Activated CD8-positive, alpha-beta T cell treated with anti-CD3 and anti-CD28 coated beads, Interleukin-2, amount 10 ng/mL, durations not matched to agents 7 days and 5 days (primary cell): ENCODE measurements at regions of chr6 and their contacts with region 1.

Region 1: DNA sequence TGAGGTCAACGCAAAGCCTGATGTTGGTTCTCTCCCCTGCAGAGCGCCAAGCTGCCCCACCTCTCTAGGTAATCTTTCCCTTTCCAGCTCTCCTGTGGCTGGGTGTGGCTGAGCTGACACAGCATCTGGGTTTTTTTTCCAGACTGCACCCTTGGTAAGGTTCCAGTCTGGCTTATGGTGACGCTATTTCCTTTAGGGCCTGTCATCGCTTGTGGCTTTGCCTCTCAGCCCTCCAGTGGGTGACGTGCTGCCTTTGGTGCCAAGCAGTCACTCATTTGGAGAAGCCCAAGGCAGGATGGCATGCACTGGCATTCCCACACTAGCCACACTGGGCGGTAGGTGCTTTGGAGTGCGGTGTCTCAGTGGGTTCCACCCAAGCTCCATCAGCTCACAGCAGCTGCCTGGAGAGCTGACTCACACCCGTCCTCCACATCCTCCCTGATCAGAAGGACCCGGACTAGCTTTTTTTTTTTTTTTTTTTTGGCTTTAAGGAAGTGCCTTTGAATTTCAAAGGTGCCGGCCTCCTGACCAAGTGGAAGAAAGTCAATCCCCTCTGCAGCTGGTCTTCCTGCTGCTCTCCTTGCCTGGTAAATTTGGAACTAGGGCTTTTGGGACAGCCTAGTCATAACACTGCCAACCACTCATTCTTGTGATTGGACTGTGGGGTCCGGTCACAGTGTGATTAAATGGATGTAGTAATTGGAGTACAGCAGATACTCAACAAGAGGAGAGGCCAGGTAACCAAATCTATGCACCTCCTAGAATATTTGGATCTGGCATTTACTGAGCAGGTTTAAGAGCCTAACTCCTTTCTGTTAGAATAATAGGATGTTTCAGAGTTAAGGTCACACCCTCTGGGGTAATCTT is 153.6 kb downstream of the CD83 start:
- DNase-seq: peak; percentile 78
- ATAC-seq: peak; percentile 82
- H3K4me3 Mint-ChIP-seq: no peak overlapping the region
- H3K27ac Mint-ChIP-seq: peak overlapping the region; percentile 90
- H3K4me1 Mint-ChIP-seq: peaks cover 50% of the 10 kb centered on the region
- H3K27me3 Mint-ChIP-seq: no peaks in the 10 kb centered on the region

Region 2: DNA sequence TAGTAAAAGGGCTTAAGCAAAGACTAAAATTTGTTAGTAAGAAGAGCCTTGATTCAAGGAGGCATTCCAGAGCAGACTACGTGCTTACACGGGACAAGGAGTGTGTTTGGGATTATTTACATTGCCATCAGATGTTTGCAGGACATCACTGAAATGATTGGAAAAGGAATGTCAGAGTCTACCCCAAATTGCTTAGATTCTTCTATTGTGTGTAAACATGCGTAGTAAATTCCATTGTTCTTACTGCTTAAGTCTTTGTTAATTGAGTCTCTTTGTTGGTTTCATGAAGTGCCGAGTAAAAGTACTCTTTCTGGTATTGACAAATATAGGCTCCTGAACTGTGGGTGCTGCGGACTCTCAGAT is 93.1 kb before region 1 on chr6:
- CTCF ChIA-PET with region 1: no interaction called
- POLR2A ChIA-PET with region 1: no interaction called
- DNase-seq: no peak
- ATAC-seq: no peak
- H3K4me3 Mint-ChIP-seq: no peak overlapping the region
- H3K27ac Mint-ChIP-seq: no peak overlapping the region
- H3K4me1 Mint-ChIP-seq: no peaks in the 10 kb centered on the region
- H3K27me3 Mint-ChIP-seq: peaks cover 5% of the 10 kb centered on the region

Region 3: GRCh38 chr6:14210663-14211561 is 60.2 kb before region 1 on chr6:
- CTCF ChIA-PET with region 1: interaction called, 10 read pairs
- POLR2A ChIA-PET with region 1: interaction called, 3 read pairs
- DNase-seq: peak; percentile 91
- ATAC-seq: peak; percentile 93
- H3K4me3 Mint-ChIP-seq: peak overlapping the region; percentile 80
- H3K27ac Mint-ChIP-seq: peak overlapping the region; percentile 85
- H3K4me1 Mint-ChIP-seq: peaks cover 19% of the 10 kb centered on the region
- H3K27me3 Mint-ChIP-seq: no peaks in the 10 kb centered on the region